T-cell (primary cell): ENCODE measurements at regions of chr9 and their contacts with region 1.

Region 1: DNA sequence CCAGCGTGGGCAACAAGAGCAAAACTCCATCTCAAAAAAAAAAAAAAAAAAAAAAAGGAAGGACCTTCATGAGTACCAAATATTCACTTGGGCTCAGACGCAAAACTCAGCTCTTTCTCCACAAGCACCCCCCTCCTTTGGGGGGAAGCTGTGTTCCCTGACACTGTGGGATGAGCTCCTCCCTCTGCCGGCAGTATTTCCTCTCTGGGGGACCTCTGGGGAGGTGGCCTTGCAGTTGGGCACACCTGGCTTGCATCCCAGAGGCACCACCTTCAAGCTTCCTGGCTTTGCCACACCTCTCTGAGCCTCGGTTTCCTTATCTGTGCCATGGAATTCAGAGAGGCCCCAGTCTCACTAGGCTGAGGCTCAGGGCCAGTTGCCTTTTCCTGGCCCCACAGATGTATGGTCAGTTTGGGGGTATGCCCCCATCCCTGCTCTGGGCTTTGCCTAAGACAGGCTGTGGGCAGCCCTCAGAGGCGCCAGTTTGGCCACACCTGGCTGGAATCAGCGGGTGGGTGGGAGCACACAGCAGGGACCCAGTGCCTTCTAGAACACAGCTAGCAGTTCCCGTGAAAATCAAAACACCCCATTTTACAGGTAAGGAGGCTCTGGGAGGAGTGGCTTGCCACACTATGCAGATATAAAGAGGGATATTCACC is 157.5 kb upstream of the IER5L start:
- DNase-seq: no peak
- ATAC-seq: no peak
- H3K4me3 ChIP-seq: no peak overlapping the region
- H3K4me3 Mint-ChIP-seq: peak overlapping the region; percentile 17 to 84 (median 79)
- H3K27ac ChIP-seq: no peak overlapping the region
- H3K27ac Mint-ChIP-seq: no peak overlapping the region
- H3K4me1 ChIP-seq: peaks cover 21 to 35% of the 10 kb centered on the region in 2 experiments
- H3K4me1 Mint-ChIP-seq: peaks cover 24 to 27% (median 27%) of the 10 kb centered on the region in 3 donors
- H3K27me3 ChIP-seq: peaks cover 0 to 38% of the 10 kb centered on the region in 2 experiments
- H3K27me3 Mint-ChIP-seq: peaks cover 0 to 14% of the 10 kb centered on the region in 2 donors

Region 2: GRCh38 chr9:128742401-128742800 is 593.2 kb before region 1 on chr9:
- CTCF ChIA-PET with region 1: no interaction called
- POLR2A ChIA-PET with region 1: no interaction called
- DNase-seq: no peak
- ATAC-seq: no peak
- H3K4me3 ChIP-seq: no peak overlapping the region
- H3K4me3 Mint-ChIP-seq: no peak overlapping the region
- H3K27ac ChIP-seq: no peak overlapping the region
- H3K27ac Mint-ChIP-seq: no peak overlapping the region
- H3K4me1 ChIP-seq: no peaks in the 10 kb centered on the region
- H3K4me1 Mint-ChIP-seq: no peaks in the 10 kb centered on the region
- H3K27me3 ChIP-seq: no peaks in the 10 kb centered on the region
- H3K27me3 Mint-ChIP-seq: no peaks in the 10 kb centered on the region

Region 3: DNA sequence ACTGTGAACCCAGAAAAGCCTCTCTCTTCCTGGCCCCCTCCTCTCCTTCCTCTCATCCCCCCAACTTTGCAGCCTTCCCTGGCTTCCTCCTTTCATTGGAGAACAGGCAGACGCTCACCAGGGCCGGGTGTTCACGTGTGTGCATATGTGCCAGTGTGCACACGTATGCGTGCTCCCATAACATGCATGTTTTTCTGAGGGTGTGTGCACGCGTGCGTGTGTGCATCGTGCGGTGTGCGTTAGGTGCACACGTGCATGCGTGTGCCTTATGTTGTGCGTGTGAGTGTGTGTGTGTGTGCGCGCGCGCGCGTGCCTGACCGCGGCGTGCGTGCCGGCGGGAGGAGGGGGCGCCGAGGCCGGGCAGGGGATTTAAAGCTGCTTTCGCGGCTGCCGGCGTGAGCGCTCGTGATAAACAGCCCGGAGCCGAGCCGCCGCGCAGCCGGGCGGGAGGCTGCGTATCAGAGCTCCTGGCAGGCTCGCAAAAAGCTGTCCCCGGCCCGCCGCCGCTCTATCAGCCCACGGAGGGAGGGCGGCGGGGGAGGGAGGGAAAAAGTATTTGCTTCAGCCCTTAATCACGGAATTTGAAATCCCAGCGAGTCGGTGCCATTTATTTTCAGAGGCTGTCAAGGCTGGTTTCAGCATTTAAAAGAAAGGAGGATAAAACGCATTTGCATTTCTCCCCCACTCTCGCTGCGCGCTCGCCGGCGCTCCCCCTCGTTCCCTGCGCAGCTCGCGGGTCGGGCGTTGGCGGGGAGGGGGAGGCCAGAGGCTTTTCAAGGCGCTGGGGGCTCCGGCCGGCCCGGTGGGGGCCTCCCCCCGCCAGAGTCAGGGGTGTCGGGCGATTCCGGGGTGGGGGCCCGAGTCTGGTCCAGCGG is 101.4 kb after region 1 on chr9:
- CTCF ChIA-PET with region 1: no interaction called
- POLR2A ChIA-PET with region 1: no interaction called
- DNase-seq: peak in 25 of 35 experiments; percentile 13 to 64 (median 34)
- ATAC-seq: peak; percentile 75 to 85 (median 81)
- H3K4me3 ChIP-seq: peak overlapping the region; percentile 48 to 75
- H3K4me3 Mint-ChIP-seq: peak overlapping the region; percentile 77 to 88 (median 82)
- H3K27ac ChIP-seq: no peak overlapping the region
- H3K27ac Mint-ChIP-seq: peak overlapping the region; percentile 52 to 80
- H3K4me1 ChIP-seq: peaks cover 5 to 32% of the 10 kb centered on the region in 2 experiments
- H3K4me1 Mint-ChIP-seq: peaks cover 26 to 36% (median 26%) of the 10 kb centered on the region in 3 donors
- H3K27me3 ChIP-seq: peaks cover 0 to 54% of the 10 kb centered on the region in 2 experiments
- H3K27me3 Mint-ChIP-seq: peaks cover 14 to 52% of the 10 kb centered on the region in 2 donors

Region 4: GRCh38 chr9:129497005-129497839 is 161.6 kb after region 1 on chr9:
- CTCF ChIA-PET with region 1: no interaction called
- POLR2A ChIA-PET with region 1: interaction called in 1 of 2 experiments, 10 read pairs
- DNase-seq: no peak
- ATAC-seq: no peak
- H3K4me3 ChIP-seq: peak overlapping the region in 1 of 2 donors; percentile 64
- H3K4me3 Mint-ChIP-seq: peak overlapping the region; percentile 73 to 82 (median 74)
- H3K27ac ChIP-seq: peak overlapping the region; percentile 38
- H3K27ac Mint-ChIP-seq: peak overlapping the region; percentile 82 to 91
- H3K4me1 ChIP-seq: peaks cover 6 to 25% of the 10 kb centered on the region in 2 experiments
- H3K4me1 Mint-ChIP-seq: peaks cover 30 to 31% (median 30%) of the 10 kb centered on the region in 3 donors
- H3K27me3 ChIP-seq: peaks cover 0 to 3% of the 10 kb centered on the region in 2 experiments
- H3K27me3 Mint-ChIP-seq: no peaks in the 10 kb centered on the region

Region 5: DNA sequence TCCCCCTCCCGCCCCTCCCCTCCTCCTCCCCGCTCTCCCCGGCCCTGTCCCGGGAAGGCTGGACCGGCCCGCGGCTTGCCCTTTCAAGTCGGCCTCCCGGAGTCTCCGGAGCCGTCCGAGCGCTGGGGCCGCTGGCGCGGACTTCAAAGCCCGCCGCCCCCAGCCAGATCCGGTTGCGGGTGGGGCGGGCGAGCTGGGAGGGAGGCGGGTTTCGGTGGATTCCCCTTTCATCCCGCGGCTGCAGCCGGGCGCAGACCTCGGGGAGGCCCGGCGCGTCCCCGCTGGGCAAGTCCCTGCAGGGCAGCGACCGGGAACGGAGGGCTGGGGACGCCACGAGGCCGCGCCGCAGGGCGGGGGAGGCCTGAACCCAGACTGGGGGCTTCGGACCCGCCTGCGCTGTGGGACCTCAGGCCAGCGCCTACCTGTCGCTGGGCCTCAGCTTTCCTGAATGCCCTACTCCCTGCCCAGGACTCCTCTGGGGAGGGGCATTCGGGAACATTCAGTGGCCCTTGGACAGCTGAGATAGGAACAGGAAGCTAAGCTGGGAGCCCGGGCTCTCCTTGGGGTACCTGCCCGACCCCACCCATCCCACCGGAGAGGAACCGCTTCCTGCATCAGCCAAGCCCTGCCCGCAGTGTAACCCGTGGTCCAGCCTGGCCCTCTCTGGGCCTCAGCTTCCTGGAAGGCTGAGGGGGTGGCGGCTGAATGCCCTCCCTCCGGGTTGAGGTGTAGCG is 261.9 kb after region 1 on chr9:
- CTCF ChIA-PET with region 1: no interaction called
- POLR2A ChIA-PET with region 1: interaction called in 1 of 2 experiments, 17 read pairs
- DNase-seq: peak in 3 of 35 experiments; percentile 33 to 65 (median 34)
- ATAC-seq: peak; percentile 59 to 76 (median 74)
- H3K4me3 ChIP-seq: peak overlapping the region; percentile 41 to 58
- H3K4me3 Mint-ChIP-seq: peak overlapping the region; percentile 51 to 68 (median 53)
- H3K27ac ChIP-seq: no peak overlapping the region
- H3K27ac Mint-ChIP-seq: peak overlapping the region in 1 of 2 donors; percentile 74
- H3K4me1 ChIP-seq: peaks cover 0 to 31% of the 10 kb centered on the region in 2 experiments
- H3K4me1 Mint-ChIP-seq: peaks cover 16 to 36% (median 25%) of the 10 kb centered on the region in 3 donors
- H3K27me3 ChIP-seq: peaks cover 0 to 31% of the 10 kb centered on the region in 2 experiments
- H3K27me3 Mint-ChIP-seq: peaks cover 3 to 10% of the 10 kb centered on the region in 2 donors